ENCODE measurements at regions of chr6 and their contacts with region 1.

Region 1: DNA sequence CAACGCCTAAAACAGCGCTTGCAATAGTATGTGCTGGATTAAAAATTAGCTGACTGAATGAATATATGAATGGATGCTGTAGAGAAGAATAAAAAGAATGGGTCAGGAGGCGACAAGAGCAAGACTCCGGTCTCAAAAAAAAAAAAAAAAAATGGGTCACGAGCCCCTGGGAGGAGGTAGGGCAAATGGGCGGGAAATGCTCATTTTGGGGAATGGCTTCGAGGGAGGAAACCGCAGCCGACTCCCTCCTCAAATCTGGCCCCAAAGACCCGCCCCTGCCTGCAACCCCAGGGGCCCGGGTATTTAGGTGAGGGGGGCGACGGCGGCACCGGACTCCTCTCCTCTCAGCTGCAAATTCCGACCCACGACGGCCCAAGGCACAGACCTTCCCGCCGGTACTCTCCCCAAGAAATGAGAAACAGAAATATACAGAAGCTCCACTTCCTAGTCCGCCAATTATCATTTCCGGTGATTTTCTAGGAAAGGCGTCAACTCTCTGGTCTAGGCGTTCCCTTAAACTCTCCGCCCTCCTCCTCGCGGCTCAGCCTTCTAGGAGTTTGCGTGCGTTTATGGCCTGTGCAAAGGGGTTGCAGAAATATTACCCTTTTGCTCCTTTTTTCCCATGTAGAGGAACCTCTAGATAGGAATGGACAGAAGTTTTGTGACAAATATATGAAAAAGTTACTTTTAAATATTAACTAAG is at the start of gene ZNF311:
- DNase-seq: peak; percentile 39
- total RNA-seq, gene ZNF311: not detected in 2 replicates

Region 2: DNA sequence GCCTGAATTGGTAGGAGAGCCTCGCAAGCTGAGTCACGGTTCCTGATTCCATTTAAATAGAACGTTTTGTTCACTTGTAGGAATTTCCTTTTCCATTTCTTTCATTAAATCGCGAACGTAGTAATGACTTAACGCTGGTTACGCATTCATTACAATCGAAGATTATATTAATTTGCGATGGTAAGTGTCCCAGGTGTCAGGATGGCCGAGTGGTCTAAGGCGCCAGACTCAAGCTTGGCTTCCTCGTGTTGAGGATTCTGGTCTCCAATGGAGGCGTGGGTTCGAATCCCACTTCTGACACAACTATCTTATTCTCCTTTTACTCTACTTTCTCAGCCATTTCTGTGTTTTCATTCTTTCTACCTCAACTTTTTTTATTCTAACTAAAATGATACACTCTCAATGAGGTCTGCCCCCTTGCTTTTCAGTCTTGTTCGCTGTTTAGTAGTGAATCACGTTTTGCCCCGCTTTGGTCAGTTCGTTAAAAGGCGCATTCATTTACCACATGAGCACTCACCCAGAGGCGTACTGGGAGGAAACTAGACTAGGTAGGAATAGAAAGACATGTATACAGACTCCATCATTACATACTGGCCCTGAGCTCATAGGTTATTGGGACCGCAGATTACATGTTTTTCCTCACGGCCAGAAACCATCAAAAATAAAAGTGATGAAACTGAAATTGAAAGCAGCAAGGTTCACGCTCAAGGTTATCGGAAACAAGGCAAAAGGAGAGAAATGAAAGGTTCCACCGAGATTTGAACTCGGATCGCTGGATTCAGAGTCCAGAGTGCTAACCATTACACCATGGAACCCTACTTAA is 64.3 kb before region 1 on chr6:
- in situ Hi-C with region 1: loop called (anchors 5 kb)
- DNase-seq: peak; percentile 91

Region 3: GRCh38 chr6:29227235-29227634 is 221.9 kb after region 1 on chr6:
- in situ Hi-C with region 1: no loop called
- DNase-seq: no peak

Measured in G401 (cell line).